AG04449 (cell line): ENCODE measurements at regions of chr1 and their contacts with region 1.

Region 1: DNA sequence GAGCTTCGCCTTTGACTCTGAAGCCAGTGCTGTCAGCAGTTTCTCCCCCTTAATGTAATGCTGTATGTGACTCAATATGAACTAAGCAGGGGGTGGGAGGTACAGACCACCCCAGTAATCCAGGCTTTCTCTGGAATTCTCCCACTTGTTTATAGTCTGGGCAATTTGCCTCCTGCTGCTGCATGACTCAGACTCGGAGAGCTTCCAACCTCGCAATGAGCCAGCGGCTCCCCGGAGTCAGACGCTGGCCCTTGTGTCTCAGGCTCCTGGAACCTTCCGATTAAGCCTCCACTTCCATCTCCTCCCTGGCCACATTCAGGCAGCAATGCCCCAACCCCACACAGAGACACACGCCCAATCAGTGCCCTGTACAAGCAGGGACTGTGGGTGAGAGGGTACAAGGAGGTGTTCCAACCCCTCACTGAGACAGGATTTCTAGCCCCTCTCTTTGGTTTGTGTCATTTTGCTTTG is 471.7 kb upstream of the VAMP3 start:
- DNase-seq: peak; percentile 94
- H3K4me3 ChIP-seq: peak overlapping the region; percentile 35
- CTCF ChIP-seq: no peak

Region 2: GRCh38 chr1:7253118-7253480 is 46.3 kb before region 1 on chr1:
- CTCF ChIA-PET with region 1: no interaction called
- POLR2A ChIA-PET with region 1: interaction called, 11 read pairs
- DNase-seq: no peak
- H3K4me3 ChIP-seq: no peak overlapping the region
- CTCF ChIP-seq: no peak

Region 3: DNA sequence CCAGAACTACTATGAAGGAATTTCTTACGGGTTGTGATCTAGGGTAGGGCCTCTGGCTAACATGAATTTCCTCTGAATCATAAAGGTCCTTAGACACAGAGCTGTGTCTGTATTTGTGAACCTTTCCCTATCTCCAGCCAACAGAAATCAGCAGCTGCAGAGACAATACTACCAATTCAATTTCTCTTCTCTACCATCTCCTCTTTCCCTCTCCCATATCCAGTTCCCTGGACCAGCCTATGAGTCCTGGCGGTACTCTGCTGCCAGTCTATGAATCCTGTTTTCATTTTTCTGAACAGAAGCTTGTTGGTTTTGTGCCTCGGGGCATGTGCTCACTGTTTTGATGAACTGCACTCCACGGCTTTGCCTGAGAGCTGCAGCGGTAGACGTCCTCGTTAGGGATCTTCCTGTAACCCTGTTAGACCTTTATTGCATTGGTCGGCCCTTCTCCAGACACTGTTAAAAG is 13.8 kb after region 1 on chr1:
- CTCF ChIA-PET with region 1: interaction called, 12 read pairs
- POLR2A ChIA-PET with region 1: interaction called, 11 read pairs
- DNase-seq: no peak
- H3K4me3 ChIP-seq: no peak overlapping the region
- CTCF ChIP-seq: no peak

Region 4: DNA sequence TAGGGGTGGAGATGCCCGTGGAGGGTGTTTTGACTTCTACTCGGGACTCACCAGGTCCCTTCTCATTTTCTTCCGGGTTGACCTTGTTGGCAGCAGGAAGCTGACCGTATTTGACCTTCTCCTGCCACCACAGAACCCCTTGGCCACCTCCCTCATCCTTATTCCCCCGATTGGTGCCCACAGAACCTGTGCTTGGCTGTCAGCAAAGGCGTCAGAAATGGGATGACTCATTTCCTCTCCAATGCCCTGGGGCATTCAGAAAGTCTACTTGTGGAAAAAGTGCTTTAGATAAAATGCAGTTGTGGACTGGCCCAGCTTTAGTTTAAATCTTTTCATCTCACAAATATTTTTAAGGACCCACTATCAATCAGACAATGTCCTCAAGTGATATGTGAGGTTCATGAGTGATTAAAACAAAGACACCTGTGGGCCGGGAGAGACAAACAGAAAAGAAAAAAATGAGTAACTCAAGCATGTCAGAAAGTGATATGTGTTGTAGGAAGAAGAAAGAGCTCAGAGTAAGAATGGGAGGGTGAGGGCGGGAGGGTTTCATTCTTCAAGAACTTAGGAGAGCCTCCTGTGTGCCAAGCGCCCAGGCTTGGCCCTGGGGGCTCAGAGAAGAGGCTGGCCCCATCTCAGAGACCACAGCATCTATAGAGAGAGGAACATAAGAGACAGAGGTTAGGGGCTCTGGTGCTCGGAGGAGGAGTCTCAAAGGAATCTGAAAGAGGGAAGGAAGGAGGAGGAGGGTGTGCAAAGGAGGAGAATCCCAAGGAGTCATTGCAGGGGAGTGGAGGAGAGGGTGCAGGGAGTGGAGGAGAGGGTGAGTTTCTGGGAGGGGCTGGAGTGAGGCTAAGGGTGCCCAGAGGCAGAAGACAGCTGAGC is 250.2 kb after region 1 on chr1:
- CTCF ChIA-PET with region 1: no interaction called
- POLR2A ChIA-PET with region 1: no interaction called
- DNase-seq: peak; percentile 63
- H3K4me3 ChIP-seq: no peak overlapping the region
- CTCF ChIP-seq: no peak